Heart right ventricle (tissue), 16 donors: ENCODE measurements at regions of chr9 and their contacts with region 1.

Region 1: GRCh38 chr9:11338130-11338529 is 725.3 kb upstream of the PTPRD start:
- DNase-seq: no peak
- ATAC-seq: no peak
- H3K4me3 ChIP-seq: no peak overlapping the region
- H3K27ac ChIP-seq: no peak overlapping the region
- H3K4me1 ChIP-seq: no peaks in the 10 kb centered on the region
- H3K27me3 ChIP-seq: no peaks in the 10 kb centered on the region
- CTCF ChIP-seq: no peak

Region 2: GRCh38 chr9:10764481-10764880 is 573.6 kb before region 1 on chr9:
- intact Hi-C with region 1: no loop called
- DNase-seq: no peak
- ATAC-seq: no peak
- H3K4me3 ChIP-seq: no peak overlapping the region
- H3K27ac ChIP-seq: no peak overlapping the region
- H3K4me1 ChIP-seq: no peaks in the 10 kb centered on the region
- H3K27me3 ChIP-seq: no peaks in the 10 kb centered on the region
- CTCF ChIP-seq: no peak

Region 3: DNA sequence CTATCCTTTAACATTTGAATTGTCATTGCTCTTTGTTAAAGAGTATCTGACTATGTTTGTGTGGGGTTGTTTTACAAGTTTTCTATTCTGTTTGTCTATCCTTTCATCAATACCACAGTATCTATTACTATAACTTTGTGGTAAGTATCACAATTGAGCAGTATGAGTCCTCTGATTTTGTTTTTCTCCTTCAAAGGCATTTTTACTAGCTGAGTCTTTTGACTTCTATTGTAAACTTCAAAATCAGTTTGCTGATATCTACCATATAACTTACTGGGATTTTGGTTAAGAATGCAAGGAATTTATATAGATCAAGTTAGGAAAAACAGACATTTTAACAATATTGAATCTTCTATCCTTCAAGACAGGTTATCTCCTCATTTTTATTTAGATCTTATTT is 64.5 kb after region 1 on chr9:
- intact Hi-C with region 1: loop called in 1 of 10 experiments (anchors 10 kb)
- DNase-seq: no peak
- ATAC-seq: no peak
- H3K4me3 ChIP-seq: no peak overlapping the region
- H3K27ac ChIP-seq: no peak overlapping the region
- H3K4me1 ChIP-seq: no peaks in the 10 kb centered on the region
- H3K27me3 ChIP-seq: no peaks in the 10 kb centered on the region
- CTCF ChIP-seq: no peak